ENCODE measurements at regions of chr2 and their contacts with region 1.

Region 1: DNA sequence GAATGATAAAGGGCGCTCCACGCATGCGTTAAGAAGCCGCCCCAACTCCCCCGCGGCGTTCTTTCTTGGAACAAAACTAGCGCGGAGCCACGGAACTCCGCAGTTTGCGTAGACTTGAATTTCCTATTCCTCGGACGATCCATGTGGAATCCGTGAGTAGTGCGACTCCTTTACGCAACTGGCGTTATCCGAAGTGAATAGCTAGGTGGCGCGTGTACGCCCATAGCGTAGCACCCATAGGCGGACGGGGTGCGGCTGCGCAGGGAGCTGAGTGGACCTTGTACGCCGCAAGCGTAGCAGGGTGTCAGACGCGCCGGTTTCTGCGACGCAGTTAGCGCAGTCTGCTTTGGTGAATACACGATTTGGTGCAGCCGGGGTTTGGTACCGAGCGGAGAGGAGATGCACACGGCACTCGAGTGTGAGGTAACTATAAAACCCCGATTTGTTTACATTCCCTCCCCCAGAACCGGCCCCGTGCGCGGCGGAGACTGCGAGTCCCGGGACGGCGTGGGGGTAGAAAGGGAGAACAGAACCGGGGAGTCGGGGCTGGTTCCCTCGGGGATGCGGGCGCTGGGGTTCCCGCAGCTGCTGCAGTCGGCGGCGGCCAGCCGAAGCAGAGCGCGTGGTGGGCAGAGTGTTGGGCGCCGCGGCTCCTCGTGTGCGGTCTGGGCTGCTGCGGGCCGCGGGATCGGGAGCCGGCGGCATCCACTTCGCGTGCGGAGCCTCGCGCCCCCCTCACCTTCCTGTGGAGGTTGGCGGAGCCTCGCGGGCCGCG is at the start of gene SLC39A10:
- DNase-seq: peak; percentile 93 to 96
- H3K4me3 ChIP-seq: peak within 1 kb of the TSS; percentile 95
- H3K4me3 Mint-ChIP-seq: peak within 1 kb of the TSS; percentile 91
- H3K27ac Mint-ChIP-seq: peak within 1 kb of the TSS; percentile 92
- H3K4me1 ChIP-seq: peaks cover 29% of the 10 kb centered on the region
- H3K4me1 Mint-ChIP-seq: peaks cover 12% of the 10 kb centered on the region
- H3K27me3 ChIP-seq: no peaks in the 10 kb centered on the region
- H3K27me3 Mint-ChIP-seq: no peaks in the 10 kb centered on the region
- CTCF ChIP-seq: no peak
- total RNA-seq, gene SLC39A10: 45.5 and 61.0 TPM in 2 replicates

Region 2: GRCh38 chr2:195330513-195330956 is 326.5 kb before region 1 on chr2:
- CTCF ChIA-PET with region 1: no interaction called
- POLR2A ChIA-PET with region 1: no interaction called
- intact Hi-C with region 1: loop called (anchors 5 kb)
- DNase-seq: peak in 1 of 2 experiments; percentile 22
- H3K4me3 ChIP-seq: no peak overlapping the region
- H3K4me3 Mint-ChIP-seq: no peak overlapping the region
- H3K27ac Mint-ChIP-seq: peak overlapping the region; percentile 23
- H3K4me1 ChIP-seq: 0 out of 2 replicates have a peak, but pooled peaks cover 4% of the 10 kb centered on the region
- H3K4me1 Mint-ChIP-seq: peaks cover 7% of the 10 kb centered on the region
- H3K27me3 ChIP-seq: no peaks in the 10 kb centered on the region
- H3K27me3 Mint-ChIP-seq: peaks cover 2% of the 10 kb centered on the region
- CTCF ChIP-seq: no peak

Region 3: DNA sequence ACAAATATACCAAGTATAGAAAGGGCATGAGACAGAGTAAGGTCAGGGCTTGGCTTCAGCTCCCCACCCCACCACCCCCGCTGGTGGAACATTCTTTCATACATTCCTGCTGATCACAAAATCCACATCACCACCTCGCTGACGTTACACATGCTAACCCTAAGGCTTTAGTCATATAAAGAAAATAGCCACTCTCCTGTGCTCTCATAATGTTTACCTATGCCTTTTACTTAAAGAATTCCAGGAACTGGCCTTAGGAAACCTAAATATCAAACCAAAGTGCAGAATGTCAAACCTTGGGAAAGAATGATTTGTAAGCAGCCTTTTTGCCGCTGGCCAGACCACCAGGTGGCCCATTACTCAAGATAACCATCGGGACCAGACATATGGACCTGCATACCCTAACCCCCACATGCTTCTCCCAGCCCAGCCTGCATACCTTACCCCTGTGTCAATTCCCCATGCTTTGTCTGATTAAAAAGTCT is 136.3 kb before region 1 on chr2:
- CTCF ChIA-PET with region 1: interaction called, 3 read pairs
- POLR2A ChIA-PET with region 1: no interaction called
- intact Hi-C with region 1: loop called (anchors 2 kb)
- DNase-seq: peak; percentile 7 to 50
- H3K4me3 ChIP-seq: no peak overlapping the region
- H3K4me3 Mint-ChIP-seq: no peak overlapping the region
- H3K27ac Mint-ChIP-seq: peak overlapping the region; percentile 7
- H3K4me1 ChIP-seq: no peaks in the 10 kb centered on the region
- H3K4me1 Mint-ChIP-seq: no peaks in the 10 kb centered on the region
- H3K27me3 ChIP-seq: no peaks in the 10 kb centered on the region
- H3K27me3 Mint-ChIP-seq: no peaks in the 10 kb centered on the region
- CTCF ChIP-seq: peak in 1 of 2 experiments; percentile 23

Region 4: DNA sequence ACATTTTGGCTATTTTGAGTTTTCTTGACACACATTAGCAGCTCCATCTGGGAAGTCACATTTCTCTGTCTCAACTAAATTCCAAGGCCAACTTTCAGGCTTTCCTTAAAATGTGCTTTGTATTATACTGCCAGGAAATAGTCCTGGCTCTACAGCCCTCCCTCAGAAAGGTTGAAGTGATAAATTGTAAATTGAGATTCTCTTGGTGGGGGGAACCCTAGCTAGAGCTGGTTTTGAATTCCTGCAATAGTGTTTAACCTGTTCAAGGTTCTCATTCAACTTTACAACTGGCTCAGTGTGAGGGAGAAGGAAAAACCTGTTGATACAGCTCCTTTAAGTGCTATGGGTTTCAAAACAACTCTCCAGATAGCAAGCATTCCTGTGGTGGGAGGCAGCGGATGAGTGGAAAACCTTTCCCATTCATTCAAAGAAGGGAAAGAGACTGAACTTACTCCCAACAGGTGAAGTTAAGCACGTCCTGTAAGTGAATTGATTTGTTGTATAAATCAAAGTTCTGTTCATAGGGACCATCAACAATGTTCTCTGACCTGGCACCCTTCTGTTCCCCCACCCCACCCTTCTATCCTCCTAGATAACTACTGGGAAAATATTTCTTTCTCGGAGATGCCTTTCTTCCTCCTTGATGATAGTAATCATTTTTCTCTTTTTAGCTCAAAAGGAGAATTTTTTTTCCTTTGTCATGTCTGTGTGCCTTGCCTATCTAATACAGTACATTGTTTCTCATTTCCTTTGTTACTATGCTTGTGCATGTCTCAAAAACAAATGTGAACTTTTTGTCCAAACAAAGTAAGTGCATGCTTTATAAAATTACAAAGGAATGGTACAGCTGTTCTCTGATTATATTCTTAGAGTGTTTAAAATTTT is 44.2 kb before region 1 on chr2:
- CTCF ChIA-PET with region 1: interaction called, 29 read pairs
- POLR2A ChIA-PET with region 1: interaction called, 9 read pairs
- intact Hi-C with region 1: loop called (anchors 1 kb)
- DNase-seq: peak; percentile 75 to 78
- H3K4me3 ChIP-seq: peak overlapping the region; percentile 22
- H3K4me3 Mint-ChIP-seq: peak overlapping the region; percentile 69
- H3K27ac Mint-ChIP-seq: peak overlapping the region; percentile 86
- H3K4me1 ChIP-seq: peaks cover 17% of the 10 kb centered on the region
- H3K4me1 Mint-ChIP-seq: peaks cover 26% of the 10 kb centered on the region
- H3K27me3 ChIP-seq: no peaks in the 10 kb centered on the region
- H3K27me3 Mint-ChIP-seq: no peaks in the 10 kb centered on the region
- CTCF ChIP-seq: no peak

Region 5: GRCh38 chr2:195721042-195721441 is 64.0 kb after region 1 on chr2:
- CTCF ChIA-PET with region 1: no interaction called
- POLR2A ChIA-PET with region 1: no interaction called
- intact Hi-C with region 1: no loop called
- DNase-seq: no peak
- H3K4me3 ChIP-seq: no peak overlapping the region
- H3K4me3 Mint-ChIP-seq: no peak overlapping the region
- H3K27ac Mint-ChIP-seq: no peak overlapping the region
- H3K4me1 ChIP-seq: no peaks in the 10 kb centered on the region
- H3K4me1 Mint-ChIP-seq: no peaks in the 10 kb centered on the region
- H3K27me3 ChIP-seq: no peaks in the 10 kb centered on the region
- H3K27me3 Mint-ChIP-seq: no peaks in the 10 kb centered on the region
- CTCF ChIP-seq: no peak

Region 6: DNA sequence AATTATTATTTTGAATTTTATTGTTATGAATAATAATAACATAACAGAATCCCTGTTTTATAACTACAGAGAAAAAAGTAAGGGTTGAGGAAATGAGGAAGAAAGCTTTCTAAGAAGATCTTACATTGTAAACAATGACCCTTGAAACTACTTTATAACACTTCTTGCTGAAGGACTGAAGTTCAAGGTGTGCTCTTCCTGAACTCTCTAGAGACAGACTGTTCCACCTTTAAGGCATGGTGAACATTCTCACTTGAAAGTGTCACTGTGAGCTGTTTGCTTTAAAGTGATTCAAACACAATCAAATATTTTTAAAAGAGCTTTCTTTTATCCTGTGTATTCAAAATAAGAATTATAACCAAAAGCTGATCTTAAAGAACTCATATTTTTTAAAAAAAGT is 280.1 kb after region 1 on chr2:
- CTCF ChIA-PET with region 1: no interaction called
- POLR2A ChIA-PET with region 1: no interaction called
- intact Hi-C with region 1: loop called (anchors 5 kb)
- DNase-seq: no peak
- H3K4me3 ChIP-seq: no peak overlapping the region
- H3K4me3 Mint-ChIP-seq: no peak overlapping the region
- H3K27ac Mint-ChIP-seq: no peak overlapping the region
- H3K4me1 ChIP-seq: no peaks in the 10 kb centered on the region
- H3K4me1 Mint-ChIP-seq: no peaks in the 10 kb centered on the region
- H3K27me3 ChIP-seq: no peaks in the 10 kb centered on the region
- H3K27me3 Mint-ChIP-seq: no peaks in the 10 kb centered on the region
- CTCF ChIP-seq: no peak